GM12878 (cell line): ENCODE measurements at regions of chr14 and their contacts with region 1.

Region 1: DNA sequence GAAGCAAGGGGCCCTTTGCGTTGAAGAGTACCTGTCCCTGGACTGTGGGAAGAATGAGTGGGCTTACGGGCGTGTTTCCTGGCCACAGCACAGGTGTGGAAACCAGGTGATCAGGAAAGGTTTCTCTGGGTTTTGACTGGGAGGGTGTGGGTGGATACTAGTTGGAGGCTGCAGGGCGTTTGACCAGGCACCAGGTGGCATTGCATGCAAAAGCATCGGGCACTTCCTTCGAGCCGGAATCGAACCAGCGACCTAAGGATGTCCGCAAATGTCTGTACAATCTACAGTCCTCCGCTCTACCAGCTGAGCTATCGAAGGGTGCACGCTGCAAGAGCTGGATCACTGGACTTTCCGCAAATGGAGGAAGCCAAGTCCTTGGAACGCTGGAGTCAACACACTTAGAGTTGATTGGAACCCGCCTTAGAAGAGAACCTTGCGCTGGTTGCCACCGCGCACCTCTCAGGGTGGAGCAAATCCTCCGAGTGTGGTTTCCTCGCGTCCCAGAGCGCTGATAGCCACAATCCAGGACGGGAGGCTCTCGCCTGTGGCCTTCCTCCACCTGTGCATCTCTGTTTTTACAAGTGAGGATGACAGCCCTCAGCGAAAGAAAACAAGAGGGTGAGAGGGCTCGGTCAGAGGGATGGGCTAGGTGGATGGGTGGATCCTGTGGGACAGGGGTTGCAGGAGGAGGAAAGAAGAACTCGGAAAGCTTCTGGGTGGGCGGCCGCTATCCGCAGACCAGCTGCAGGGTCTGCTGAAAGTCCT is 21.2 kb upstream of the RNASE4 start:
- DNase-seq: peak; percentile 88
- ATAC-seq: peak; percentile 73
- H3K4me3 ChIP-seq: peak overlapping the region; percentile 83
- H3K27ac ChIP-seq: peak overlapping the region; percentile 20; the same call in 1 of the 2 replicates
- H3K4me1 ChIP-seq: peaks cover 20% of the 10 kb centered on the region
- H3K27me3 ChIP-seq: no peaks in the 10 kb centered on the region
- CTCF ChIP-seq: peak; percentile 72 to 84 (median 77)
- EP300 ChIP-seq: peak in 1 of 2 experiments; percentile 45; a peak in 1 of 4 replicates
- POLR2A ChIP-seq: 0 out of 2 replicates have a peak, but pooled peaks have one; percentile 32
- RAD21 ChIP-seq: peak; percentile 75

Region 2: DNA sequence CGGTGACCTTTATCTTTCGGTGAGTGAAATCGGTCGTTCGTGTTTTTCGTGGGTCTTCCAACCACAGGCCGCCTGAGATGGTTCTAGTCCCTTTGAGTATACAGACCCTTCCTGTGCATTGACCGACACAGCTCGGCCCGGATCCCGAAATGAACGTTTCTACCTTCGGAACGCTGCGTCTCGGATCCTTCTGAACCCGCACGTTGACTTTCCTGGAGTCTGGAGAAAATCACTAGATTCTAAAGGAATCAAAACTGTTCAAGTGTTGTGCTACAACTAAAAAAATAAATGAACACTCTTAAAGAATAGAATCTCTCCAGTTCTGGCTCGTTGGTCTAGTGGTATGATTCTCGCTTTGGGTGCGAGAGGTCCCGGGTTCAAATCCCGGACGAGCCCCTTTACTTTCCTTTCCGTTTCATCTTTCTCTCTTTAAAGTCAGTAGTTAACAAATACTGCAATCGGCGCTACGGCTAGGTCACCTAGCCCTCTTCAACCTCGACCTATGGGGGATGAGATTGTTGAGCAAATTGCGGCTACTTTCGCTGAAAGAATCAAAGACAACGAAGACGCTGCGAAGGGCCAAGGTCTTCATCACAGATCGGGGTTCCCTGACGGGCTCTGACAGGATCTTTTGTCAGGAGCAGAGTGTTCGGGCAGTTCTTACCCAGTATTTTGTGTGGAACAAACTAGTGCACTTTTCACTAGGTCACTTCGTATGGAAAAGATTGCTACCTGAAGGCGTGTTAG is 30.3 kb before region 1 on chr14:
- CTCF ChIA-PET with region 1: interaction called, 6 read pairs
- POLR2A ChIA-PET with region 1: interaction called, 4 read pairs
- RAD21 ChIA-PET with region 1: interaction called, 5 read pairs
- SMC1A ChIA-PET with region 1: interaction called, 9 read pairs
- in situ Hi-C with region 1: no loop called
- intact Hi-C with region 1: loop called (anchors 2 kb)
- DNase-seq: peak; percentile 76
- ATAC-seq: peak; percentile 77
- H3K4me3 ChIP-seq: peak overlapping the region; percentile 88; the same call in 1 of the 2 replicates
- H3K27ac ChIP-seq: no peak overlapping the region
- H3K4me1 ChIP-seq: peaks cover 7% of the 10 kb centered on the region; the same call in 1 of the 2 replicates
- H3K27me3 ChIP-seq: peaks cover 0 to 2% of the 10 kb centered on the region in 2 experiments; a peak in 1 of 4 replicates
- CTCF ChIP-seq: no peak
- EP300 ChIP-seq: peak in 1 of 2 experiments; percentile 44; a peak in 1 of 4 replicates
- POLR2A ChIP-seq: no peak
- RAD21 ChIP-seq: no peak

Region 3: DNA sequence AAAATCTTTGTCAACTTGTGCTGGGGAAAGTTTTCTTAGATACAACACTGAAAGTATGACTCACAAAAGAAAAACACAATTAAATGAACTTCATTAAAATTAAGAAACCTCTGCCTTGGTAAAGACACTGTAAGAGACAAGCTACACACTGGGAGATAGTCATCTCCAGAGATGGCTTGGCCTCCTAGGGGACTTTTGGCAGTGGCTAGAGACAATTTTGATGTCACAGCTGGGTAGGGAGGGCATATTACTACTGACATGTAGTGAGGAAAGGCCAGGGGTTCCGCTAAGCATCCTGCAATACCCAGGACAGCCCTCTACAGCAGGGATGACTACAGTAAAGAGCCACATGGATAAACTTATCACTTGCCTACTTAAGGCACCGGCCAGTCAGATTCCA is 12.5 kb after region 1 on chr14:
- CTCF ChIA-PET with region 1: interaction called, 214 read pairs
- POLR2A ChIA-PET with region 1: interaction called, 69 read pairs
- RAD21 ChIA-PET with region 1: interaction called, 156 read pairs
- SMC1A ChIA-PET with region 1: interaction called, 150 read pairs
- in situ Hi-C with region 1: no loop called
- intact Hi-C with region 1: no loop called
- DNase-seq: no peak
- ATAC-seq: peak; percentile 82
- H3K4me3 ChIP-seq: no peak overlapping the region
- H3K27ac ChIP-seq: no peak overlapping the region
- H3K4me1 ChIP-seq: peaks cover 18% of the 10 kb centered on the region
- H3K27me3 ChIP-seq: no peaks in the 10 kb centered on the region
- CTCF ChIP-seq: no peak
- EP300 ChIP-seq: peak in 1 of 2 experiments; percentile 34; a peak in 1 of 4 replicates
- POLR2A ChIP-seq: no peak
- RAD21 ChIP-seq: no peak